AG04449 (cell line): ENCODE measurements at regions of chr13 and their contacts with region 1.

Region 1: DNA sequence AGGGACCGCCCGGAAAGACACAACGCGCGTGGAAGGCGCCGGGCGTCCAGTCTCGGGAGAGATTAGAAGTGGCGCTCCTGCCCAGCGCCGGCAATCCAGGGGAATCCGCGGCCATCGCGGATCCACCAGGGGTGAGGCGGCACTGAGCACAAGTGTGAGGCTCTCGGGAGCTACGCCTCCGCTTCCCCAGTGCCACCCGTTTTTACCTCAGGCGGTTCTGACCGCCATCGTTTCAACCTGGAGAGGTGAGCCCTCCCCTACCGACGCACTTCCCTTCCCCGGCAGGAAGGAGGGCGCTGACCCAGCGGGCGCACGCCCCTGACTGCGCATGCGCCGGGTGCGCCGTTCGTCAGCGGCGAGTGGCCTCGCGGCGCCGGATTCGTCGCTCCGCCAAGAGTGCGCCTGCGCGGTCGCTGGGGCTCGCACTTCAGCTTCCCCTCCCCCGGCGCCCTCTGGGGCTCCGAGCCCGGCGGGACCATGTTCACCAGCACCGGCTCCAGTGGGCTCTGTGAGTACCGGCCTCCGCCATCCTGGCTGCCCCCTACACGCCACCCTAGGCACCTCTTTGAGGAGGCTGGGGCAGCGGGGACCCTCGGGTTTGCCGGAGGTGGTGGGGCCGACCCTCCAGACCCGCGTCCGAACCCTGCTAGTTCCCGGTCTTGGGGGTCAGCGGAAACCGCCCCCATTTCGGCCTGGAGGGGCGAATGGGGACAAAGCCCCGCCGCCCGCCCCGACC is at the start of gene UBAC2:
- DNase-seq: peak; percentile 45
- H3K4me3 ChIP-seq: peak within 1 kb of the TSS; percentile 98
- CTCF ChIP-seq: no peak

Region 2: GRCh38 chr13:98782654-98783053 is 417.9 kb before region 1 on chr13:
- CTCF ChIA-PET with region 1: no interaction called
- POLR2A ChIA-PET with region 1: no interaction called
- DNase-seq: no peak
- H3K4me3 ChIP-seq: no peak overlapping the region
- CTCF ChIP-seq: no peak

Region 3: GRCh38 chr13:99231721-99232120 is 31.1 kb after region 1 on chr13:
- CTCF ChIA-PET with region 1: interaction called, 11 read pairs
- POLR2A ChIA-PET with region 1: interaction called, 5 read pairs
- DNase-seq: no peak
- H3K4me3 ChIP-seq: no peak overlapping the region
- CTCF ChIP-seq: no peak

Region 4: DNA sequence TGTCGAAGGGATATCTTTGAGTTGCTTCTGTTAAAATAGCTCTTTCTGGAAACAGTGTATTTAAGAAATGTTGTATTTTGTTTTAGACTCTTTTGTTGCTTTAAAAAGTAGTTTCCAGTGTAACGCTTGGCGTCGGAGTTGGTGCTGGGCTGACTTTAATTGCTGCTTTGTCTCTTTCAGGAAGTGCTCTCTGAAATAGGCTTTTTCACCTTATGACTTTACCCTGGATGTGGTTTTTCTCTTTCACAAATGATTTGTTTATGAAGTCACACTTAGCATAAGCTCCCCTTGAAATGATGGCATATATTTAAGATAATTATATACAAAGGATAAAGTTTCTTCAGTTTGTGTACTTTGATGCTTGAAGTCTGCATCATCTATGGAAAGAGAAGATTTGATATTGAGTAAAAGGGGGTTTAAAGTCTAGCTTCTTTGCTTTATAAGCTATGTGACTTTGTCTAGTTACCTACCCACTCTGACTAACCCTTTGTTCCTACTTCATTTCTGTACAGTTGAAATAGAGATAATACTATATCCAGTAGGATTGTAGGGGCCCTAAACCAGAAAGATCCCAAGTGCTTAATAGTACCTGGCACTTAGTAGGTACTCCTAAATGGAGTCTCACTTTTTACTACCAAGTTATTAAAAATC is 57.7 kb after region 1 on chr13 and contains the start of gene GPR18:
- CTCF ChIA-PET with region 1: interaction called, 85 read pairs
- POLR2A ChIA-PET with region 1: interaction called, 9 read pairs
- DNase-seq: no peak
- H3K4me3 ChIP-seq: no peak within 1 kb of the TSS
- CTCF ChIP-seq: no peak